ENCODE measurements at regions of chr1 and their contacts with region 1.

Region 1: GRCh38 chr1:161382214-161383019 is 14.7 kb upstream of the CFAP126 start:
- DNase-seq: peak in 1 of 2 experiments; percentile 83
- H3K4me3 ChIP-seq: no peak overlapping the region
- H3K4me1 ChIP-seq: no peaks in the 10 kb centered on the region
- H3K27me3 ChIP-seq: no peaks in the 10 kb centered on the region

Region 2: DNA sequence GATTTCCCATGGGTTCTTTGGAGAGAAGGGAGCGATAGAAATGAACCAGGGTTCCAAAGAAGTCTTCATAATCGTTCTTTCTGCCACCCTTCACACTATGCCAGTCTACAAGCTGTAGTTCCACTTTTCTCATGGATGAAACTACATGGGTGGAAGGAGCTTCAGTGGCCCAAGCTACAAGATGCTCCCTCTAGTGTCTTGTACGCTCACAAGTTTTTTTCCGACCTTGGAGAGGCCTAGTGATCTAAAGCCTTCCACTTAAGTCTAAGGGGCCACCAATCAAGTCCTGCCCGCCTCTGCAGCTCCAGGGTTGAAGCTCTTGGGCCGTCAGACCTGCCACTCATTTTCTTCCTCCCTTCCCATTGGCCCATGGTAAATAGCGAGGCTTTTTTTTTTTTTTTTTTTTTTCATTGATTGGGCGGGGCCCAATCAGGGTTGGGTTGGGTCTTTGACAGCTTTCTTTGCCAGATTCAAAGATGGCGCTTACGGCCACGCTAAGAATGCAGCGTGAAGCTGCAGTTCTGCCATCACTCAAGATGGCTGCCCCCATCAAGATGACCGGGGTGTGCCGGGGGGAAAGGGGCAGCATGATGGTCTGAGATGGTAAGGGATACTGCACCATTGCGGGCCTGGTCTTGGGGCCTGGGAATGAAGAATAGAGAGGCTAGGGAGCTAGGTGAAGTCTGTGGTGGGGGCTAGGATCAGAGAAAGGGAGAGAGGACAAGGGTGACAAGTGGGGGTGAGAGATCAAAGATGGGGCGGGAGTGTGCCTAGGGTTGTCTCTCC is 156.7 kb before region 1 on chr1 and contains the start of gene TOMM40L:
- in situ Hi-C with region 1: loop called (anchors 5 kb)
- DNase-seq: peak; percentile 94 to 99
- H3K4me3 ChIP-seq: peak within 1 kb of the TSS; percentile 69
- H3K4me1 ChIP-seq: peaks cover 11% of the 10 kb centered on the region
- H3K27me3 ChIP-seq: no peaks in the 10 kb centered on the region

Region 3: DNA sequence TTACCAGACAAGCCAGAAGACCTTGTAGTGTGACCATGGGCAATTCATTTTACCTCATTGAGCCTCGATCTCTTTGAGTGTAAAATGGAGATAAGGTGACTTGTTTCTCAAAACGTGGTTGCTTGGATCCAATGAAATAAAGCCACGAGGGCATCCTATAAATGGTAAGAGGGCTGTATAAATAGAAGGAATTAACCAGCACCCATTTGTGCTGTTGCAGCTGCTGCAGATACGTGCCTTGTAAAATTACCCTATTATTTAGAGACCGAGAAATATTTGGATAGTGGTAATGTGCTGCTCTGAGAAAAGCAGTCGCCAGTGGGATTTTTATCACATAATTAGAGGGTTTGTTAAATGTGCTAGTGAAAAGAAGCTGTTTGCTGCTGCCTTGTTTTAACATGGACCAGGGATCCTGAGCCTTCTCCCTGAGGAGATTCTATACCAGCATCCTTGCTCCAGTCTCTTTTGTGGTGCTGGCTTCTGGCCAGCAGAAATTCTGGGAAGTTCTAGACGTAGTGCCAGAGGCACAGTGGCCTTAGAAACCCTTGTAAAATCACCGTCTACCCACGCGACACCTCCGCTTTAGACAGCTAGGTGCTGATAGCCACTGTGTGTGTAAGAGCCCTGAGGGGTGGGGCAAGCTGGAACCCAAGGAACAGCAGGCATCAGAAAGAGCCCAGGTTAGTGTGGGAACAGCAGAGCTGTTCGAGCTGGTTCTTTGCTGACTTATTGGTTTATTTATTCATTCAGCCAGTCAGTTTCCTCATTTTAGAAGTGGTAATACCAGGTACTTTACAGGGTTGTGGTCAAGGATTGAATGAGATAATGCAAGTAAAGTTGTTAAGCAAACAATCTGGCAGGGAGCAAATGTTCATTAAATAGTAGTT is 824.6 kb after region 1 on chr1:
- in situ Hi-C with region 1: no loop called
- DNase-seq: peak in 1 of 2 experiments; percentile 29
- H3K4me3 ChIP-seq: no peak overlapping the region
- H3K4me1 ChIP-seq: no peaks in the 10 kb centered on the region; the same call in 1 of the 2 replicates
- H3K27me3 ChIP-seq: no peaks in the 10 kb centered on the region